Activated CD8-positive, alpha-beta T cell treated with anti-CD3 and anti-CD28 coated beads, Interleukin-2, amount 10 ng/mL, durations not matched to agents 7 days and 5 days (primary cell): ENCODE measurements at regions of chr1 and their contacts with region 1.

Region 1: DNA sequence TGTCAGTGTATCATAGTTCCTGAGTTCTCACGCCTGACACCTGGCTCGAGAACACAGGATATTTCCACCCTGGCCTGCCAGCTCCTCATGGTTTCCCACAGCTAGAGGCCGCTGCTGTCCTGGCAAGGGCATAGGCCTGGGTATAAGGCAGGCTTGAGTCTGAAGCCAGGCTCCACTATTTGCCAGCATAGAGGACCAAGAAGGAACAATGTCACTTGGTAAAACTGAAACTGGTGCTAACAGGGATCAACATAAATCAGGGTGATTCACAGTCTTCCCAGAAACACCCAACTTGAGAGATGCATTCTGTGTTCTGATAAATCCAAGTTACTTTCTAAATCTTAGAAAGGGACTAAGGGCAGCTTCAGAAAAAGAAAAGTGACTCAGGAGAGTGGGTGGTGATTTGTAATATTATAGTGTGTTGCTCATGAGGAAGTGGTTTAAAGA is 6.9 kb upstream of the S100A2 start:
- DNase-seq: peak; percentile 65
- ATAC-seq: peak; percentile 78
- H3K4me3 Mint-ChIP-seq: no peak overlapping the region
- H3K27ac Mint-ChIP-seq: no peak overlapping the region
- H3K4me1 Mint-ChIP-seq: peaks cover 33% of the 10 kb centered on the region
- H3K27me3 Mint-ChIP-seq: peaks cover 17% of the 10 kb centered on the region

Region 2: DNA sequence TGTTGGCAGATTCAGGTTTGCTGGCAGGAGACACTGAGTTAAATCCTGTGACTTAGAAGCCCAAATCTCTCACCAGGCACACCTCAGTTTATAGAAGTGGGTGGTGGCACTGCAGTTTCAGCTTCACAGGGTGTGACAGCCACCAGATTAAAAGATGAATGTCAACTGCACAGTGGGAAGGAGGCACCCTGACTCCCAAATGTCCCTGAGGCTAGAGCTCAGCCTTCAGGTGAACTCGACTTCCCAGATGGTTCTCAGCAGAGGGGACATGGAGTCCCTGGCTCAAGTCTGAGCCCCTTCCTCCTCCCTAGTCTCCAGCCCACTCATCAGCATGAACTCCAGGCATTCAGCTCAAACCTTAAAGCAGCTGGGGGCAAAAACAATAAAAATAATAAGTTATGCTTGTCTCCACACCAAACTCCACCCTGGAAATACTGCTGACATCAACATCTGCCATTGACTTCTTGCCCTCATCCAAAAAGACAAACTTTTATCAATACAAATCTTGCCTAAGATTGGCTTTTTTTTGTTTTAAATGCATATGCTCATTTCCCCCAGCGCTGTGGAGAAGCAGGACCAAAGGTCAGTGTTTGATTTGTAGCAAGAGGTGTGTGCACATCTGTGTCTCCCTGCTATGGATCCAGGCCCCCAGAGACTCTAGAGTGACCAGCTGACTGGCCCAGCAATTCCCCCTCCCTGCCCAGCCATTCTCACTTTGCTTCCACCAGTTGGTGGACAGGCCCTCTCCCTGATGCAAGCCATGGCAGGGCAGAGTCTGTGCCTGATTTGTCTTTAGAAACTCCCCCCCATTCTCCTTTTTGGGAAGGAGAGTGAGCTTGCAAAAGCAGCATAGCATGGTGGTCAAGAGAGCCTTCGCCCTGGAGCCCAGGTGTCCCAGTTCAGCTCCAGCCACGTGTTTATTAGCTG is 93.6 kb before region 1 on chr1:
- CTCF ChIA-PET with region 1: no interaction called
- POLR2A ChIA-PET with region 1: no interaction called
- DNase-seq: no peak
- ATAC-seq: no peak
- H3K4me3 Mint-ChIP-seq: no peak overlapping the region
- H3K27ac Mint-ChIP-seq: no peak overlapping the region
- H3K4me1 Mint-ChIP-seq: no peaks in the 10 kb centered on the region
- H3K27me3 Mint-ChIP-seq: peaks cover 35% of the 10 kb centered on the region

Region 3: GRCh38 chr1:153520230-153520629 is 52.4 kb before region 1 on chr1:
- CTCF ChIA-PET with region 1: interaction called, 20 read pairs
- POLR2A ChIA-PET with region 1: no interaction called
- DNase-seq: no peak
- ATAC-seq: no peak
- H3K4me3 Mint-ChIP-seq: no peak overlapping the region
- H3K27ac Mint-ChIP-seq: no peak overlapping the region
- H3K4me1 Mint-ChIP-seq: peaks cover 27% of the 10 kb centered on the region
- H3K27me3 Mint-ChIP-seq: peaks cover 3% of the 10 kb centered on the region

Region 4: GRCh38 chr1:153532769-153533599 is 39.6 kb before region 1 on chr1:
- CTCF ChIA-PET with region 1: interaction called, 245 read pairs
- POLR2A ChIA-PET with region 1: interaction called, 12 read pairs
- DNase-seq: peak; percentile 86
- ATAC-seq: peak; percentile 29
- H3K4me3 Mint-ChIP-seq: peak overlapping the region; percentile 98
- H3K27ac Mint-ChIP-seq: peak overlapping the region; percentile 90
- H3K4me1 Mint-ChIP-seq: peaks cover 63% of the 10 kb centered on the region
- H3K27me3 Mint-ChIP-seq: no peaks in the 10 kb centered on the region

Region 5: GRCh38 chr1:153553830-153554541 is 18.6 kb before region 1 on chr1:
- CTCF ChIA-PET with region 1: interaction called, 12 read pairs
- POLR2A ChIA-PET with region 1: interaction called, 3 read pairs
- DNase-seq: no peak
- ATAC-seq: no peak
- H3K4me3 Mint-ChIP-seq: no peak overlapping the region
- H3K27ac Mint-ChIP-seq: no peak overlapping the region
- H3K4me1 Mint-ChIP-seq: peaks cover 12% of the 10 kb centered on the region
- H3K27me3 Mint-ChIP-seq: peaks cover 5% of the 10 kb centered on the region

Region 6: DNA sequence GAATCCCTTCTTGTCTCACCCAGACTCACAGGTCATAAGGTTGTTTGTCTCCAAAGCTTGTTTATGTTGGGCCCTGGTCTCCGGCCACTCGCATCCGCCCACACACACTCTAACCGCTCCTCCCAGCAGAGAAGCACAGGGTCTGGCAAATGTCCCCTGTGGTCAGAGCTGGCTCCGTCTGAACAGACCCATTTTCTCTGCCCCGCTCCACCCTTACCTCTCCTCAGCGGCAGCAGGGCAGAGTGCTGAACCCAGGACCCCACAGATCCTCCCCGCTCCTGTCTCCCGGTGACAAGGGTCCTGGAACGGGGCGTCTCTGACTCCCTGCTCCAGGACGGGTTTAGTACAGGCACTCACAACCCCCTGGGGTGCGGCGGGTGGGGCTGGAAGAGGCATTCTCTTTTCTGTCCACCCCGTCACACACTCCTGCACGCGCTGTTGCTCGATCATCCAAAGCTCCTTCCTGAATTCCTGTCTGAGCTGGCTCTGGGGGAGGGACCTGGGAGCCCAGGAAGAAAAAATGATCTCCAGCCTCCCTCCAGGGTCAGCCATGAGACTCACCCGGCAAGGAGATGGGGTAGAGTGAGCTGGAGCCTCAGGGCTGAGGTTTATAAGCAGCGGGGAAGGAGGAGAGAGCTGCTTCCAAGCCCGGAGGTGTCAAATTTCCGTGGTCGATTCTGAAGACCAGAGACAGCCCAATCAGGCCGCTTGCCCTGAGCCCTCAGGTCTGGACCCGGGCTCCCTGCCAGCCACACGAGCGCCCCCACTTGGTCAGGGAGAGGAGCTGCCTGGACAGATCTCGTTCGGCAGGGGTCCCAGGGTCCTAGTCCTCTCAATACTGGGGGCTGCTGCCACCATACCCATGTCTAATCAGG is 54.6 kb after region 1 on chr1 and contains the start of gene S100A13:
- CTCF ChIA-PET with region 1: interaction called, 33 read pairs
- POLR2A ChIA-PET with region 1: no interaction called
- DNase-seq: no peak
- ATAC-seq: no peak
- H3K4me3 Mint-ChIP-seq: no peak within 1 kb of the TSS
- H3K27ac Mint-ChIP-seq: no peak within 1 kb of the TSS
- H3K4me1 Mint-ChIP-seq: peaks cover 18% of the 10 kb centered on the region
- H3K27me3 Mint-ChIP-seq: no peaks in the 10 kb centered on the region
- total RNA-seq, gene S100A13: 6.2 to 7.0 TPM

Region 7: DNA sequence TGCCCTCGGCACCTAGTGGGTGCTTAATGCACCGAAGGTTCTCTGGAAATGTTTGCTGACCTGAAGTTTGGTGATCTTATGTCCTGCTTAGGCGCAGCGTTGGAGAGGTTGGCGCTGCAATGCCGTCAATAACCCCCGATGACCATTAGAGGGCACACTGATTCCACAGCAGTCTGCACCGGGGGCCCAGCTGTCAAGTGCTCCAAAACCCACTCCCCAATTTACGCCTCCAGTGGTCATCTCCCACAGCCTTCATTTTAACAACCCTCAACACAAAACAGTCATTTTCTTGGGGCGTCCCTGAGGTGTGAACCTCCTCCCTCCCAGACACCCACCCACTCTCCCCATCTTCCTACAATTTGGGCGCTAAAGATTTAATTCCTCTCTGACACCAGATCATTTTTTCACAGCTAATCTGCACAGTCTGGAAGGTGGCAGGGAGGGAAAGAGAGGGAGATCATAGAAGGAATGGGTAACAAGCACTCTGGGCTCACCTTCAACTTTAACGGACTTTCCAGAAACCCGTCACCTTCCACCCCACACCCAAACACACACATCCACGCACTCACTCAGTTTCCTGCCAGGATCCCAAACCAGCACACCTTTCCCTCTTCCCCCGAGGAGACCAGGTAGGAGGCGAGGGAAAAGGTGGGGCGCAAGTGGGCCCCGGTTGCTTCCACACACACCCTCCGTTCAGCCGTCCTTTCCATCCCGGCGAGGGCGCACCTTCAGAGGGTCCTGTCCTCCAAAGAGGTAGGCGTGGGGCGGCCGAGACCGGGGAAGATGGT is 105.3 kb after region 1 on chr1:
- CTCF ChIA-PET with region 1: no interaction called
- POLR2A ChIA-PET with region 1: no interaction called
- DNase-seq: peak; percentile 66
- ATAC-seq: peak; percentile 43
- H3K4me3 Mint-ChIP-seq: peak overlapping the region; percentile 73
- H3K27ac Mint-ChIP-seq: no peak overlapping the region
- H3K4me1 Mint-ChIP-seq: peaks cover 21% of the 10 kb centered on the region
- H3K27me3 Mint-ChIP-seq: peaks cover 46% of the 10 kb centered on the region

Region 8: DNA sequence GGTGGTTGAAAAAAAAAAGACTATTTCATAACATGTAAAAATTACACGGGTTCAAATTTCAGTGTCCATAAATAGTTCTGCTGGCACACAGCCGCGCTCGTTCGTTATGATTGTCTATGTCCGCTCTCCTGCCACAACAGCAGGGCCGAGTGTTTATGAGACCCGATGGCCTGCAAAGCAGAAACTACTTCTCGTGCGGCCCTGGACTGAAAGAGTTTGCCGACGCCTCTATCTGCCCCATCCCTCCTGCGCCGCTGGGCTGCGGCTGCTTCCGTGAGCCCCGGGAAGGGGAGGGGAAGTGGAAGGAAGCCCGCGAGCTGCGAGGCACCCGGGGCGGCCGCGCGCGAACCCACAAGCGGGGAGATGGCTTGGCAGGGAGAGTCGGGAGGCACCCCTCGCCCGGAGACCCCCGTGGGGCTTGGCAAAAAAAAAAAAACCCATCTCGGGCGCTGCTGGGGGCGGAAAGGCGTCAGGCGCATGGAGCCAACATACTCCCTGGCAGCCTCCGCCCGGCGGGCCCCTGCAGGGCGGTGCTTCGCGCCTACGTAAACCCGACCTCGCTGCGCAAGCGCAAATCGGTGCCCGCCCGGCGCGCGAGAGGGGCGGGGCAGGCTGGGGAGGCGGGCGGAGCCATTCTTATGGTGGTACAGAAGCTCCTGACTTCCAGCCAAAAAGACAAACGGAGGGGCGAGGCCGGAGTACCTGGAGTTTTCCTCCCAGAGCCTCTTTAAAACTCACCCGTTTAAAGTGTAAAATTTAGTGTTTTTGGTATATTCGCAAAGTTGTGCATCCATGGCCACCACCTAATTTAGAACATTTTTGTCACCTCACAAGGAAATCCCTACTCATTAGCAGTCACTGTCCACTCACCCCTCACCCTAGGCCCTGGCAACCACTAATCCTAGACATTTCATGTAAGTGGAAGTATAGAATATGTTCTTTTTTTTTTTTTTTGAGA is 210.9 kb after region 1 on chr1:
- CTCF ChIA-PET with region 1: no interaction called
- POLR2A ChIA-PET with region 1: no interaction called
- DNase-seq: peak; percentile 94
- ATAC-seq: peak; percentile 97
- H3K4me3 Mint-ChIP-seq: peak overlapping the region; percentile 88
- H3K27ac Mint-ChIP-seq: peak overlapping the region; percentile 97
- H3K4me1 Mint-ChIP-seq: peaks cover 26% of the 10 kb centered on the region
- H3K27me3 Mint-ChIP-seq: peaks cover 6% of the 10 kb centered on the region